ENCODE measurements at regions of chr2 and their contacts with region 1.

Region 1: DNA sequence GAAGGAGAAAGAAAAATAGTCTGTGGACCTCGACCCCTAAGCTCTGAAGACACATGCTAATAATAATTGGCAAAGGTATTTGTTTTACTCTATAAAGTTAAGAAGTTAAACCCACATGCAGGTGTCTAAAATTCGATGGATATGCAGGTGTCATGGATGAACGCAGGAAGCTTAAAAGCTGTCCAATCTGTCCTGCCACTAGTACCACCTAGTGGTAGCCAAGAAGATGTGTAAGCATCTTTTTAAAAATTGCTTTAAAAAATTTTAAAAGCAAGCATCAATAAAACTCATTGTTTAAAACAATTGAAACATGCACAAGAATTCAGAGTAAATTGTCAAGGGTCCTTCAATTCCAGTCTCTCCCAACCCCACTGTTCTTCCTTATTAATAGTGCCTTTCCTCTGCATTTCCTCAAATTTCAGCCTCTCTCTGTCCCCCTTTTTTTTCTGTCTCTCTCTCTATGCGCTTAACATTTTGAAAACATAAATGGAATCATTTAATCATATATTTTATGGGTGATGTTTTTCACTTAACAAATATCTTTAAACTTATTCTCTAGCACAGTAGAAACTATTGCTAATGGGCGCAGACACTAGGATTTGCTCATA is 30.6 kb upstream of the PPP3R1 start:
- DNase-seq: no peak
- H3K4me3 ChIP-seq: no peak overlapping the region
- CTCF ChIP-seq: peak; percentile 54

Region 2: DNA sequence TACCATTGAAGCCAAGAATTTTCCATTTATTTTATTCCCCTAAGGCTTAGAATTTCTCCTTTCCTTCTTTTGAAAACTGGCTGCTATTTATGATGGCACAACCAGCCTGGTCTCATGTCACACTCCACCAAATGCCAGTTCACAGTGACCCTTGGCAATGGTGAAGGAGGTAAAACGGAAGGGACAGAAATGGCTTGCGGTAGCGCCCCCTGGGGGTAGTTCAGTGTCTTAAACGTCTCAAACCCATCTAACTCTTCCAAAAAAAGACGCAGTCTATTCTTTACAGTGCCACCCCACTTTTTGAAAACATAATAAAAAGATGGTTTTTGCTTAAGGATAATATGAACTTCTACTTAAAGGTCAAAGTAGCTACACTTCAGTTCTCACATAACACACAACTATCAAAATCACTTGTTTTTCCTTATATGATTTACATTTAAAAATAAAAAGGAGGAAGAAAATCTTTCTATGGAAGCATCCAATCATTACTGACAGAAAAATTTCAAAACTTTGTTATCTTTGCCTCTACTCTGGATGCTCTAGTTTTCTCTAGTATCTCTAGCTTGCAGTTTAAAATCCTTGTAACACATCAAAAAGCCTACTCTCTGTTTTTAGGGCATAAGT is 97.3 kb before region 1 on chr2:
- CTCF ChIA-PET with region 1: interaction called, 14 read pairs
- POLR2A ChIA-PET with region 1: no interaction called
- DNase-seq: no peak
- H3K4me3 ChIP-seq: no peak overlapping the region
- CTCF ChIP-seq: peak; percentile 51

Region 3: DNA sequence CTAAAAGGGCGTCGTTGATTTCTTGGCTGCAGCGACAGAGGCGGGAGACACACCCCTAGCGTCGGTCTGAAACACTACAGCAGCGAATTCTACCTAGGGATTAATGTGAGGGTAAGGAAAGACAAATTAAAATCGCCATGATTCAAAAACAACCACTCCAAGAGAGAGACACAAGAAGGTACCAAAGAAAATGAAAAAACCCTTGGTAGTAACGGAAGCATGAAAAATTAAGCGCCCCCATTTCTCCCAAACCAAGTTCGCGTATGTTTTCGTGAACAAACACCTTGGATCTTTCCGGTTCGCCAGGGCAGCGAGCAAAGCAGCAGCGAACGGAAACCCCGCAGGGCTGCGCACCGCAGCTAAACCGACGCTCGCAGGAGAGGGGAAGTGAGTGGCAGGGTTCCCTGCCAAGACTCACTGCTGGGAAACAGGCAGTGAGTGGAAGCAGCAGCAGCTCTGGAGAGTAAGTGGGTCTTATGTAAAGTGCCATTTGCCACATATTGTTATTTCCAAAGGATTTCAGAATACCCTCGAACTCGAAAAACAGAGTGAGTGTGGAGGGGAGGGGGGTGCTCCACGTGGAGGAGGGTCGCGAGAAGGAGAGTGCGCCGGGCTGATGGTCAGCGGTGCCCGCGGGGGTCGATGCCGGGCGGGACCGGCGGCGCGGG is 31.6 kb before region 1 on chr2:
- CTCF ChIA-PET with region 1: interaction called, 23 read pairs
- POLR2A ChIA-PET with region 1: interaction called, 3 read pairs
- DNase-seq: no peak
- H3K4me3 ChIP-seq: peak overlapping the region; percentile 87
- CTCF ChIP-seq: peak; percentile 74

Region 4: GRCh38 chr2:68272246-68272994 is 10.5 kb before region 1 on chr2:
- CTCF ChIA-PET with region 1: interaction called, 14 read pairs
- POLR2A ChIA-PET with region 1: no interaction called
- DNase-seq: no peak
- H3K4me3 ChIP-seq: no peak overlapping the region
- CTCF ChIP-seq: no peak

Region 5: DNA sequence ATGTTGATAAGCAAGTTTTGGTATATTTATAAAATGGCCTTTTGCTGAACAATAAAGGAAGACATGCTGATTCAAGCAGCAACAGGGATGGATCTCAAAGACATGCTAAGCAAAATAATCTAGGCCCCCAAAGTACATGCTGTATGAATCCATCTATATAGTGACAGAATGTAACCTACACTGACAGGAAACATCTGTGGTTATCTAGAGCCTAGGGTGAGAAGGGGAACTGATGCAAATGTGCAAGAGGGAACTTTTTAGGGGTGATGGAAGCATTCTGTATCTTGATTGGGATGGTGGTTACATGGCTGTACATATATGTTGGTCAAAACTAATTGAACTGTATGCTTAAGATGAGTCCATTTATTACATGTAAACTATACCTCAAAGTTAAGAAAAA is 12.6 kb after region 1 on chr2:
- CTCF ChIA-PET with region 1: interaction called, 31 read pairs
- POLR2A ChIA-PET with region 1: no interaction called
- DNase-seq: no peak
- H3K4me3 ChIP-seq: no peak overlapping the region
- CTCF ChIP-seq: no peak

Region 6: GRCh38 chr2:68302281-68302875 is 19.5 kb after region 1 on chr2:
- CTCF ChIA-PET with region 1: interaction called, 11 read pairs
- POLR2A ChIA-PET with region 1: no interaction called
- DNase-seq: no peak
- H3K4me3 ChIP-seq: no peak overlapping the region
- CTCF ChIP-seq: no peak

Region 7: GRCh38 chr2:68441179-68441993 is 158.5 kb after region 1 on chr2:
- CTCF ChIA-PET with region 1: interaction called, 36 read pairs
- POLR2A ChIA-PET with region 1: no interaction called
- DNase-seq: no peak
- H3K4me3 ChIP-seq: no peak overlapping the region
- CTCF ChIP-seq: peak; percentile 79

Region 8: DNA sequence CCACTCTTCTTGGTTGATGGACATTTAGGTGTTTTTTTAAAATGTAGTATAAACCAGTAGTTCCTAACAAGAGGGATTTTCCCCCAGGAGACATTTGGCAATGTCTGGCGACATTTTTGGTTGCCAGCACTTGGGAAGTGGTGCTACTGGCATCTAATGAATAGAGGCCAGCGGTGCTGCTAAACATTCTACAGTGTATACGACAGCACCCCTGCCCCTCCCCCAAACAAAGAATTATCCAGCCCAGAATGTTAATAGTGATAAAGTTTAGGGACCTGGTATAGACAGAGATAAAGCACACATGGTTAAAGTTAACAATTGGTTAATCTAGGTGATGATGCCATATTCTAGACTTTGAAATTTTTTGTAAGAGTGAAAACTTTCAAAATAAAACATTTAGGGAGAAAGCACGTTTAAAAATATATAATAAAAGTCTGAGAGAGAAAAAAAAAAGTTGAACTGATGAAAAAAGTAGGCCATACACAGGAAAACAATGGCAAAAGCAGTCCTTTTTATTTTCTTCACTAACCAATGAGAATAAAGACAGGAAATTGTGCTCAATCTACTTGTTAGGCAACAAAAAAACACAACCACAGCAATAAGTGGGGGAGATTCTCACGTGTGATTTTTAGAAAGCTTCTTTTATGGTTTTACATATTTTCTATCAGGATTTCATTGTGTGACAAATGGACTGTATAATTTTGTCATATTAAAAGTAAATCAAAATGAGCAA is 169.4 kb after region 1 on chr2:
- CTCF ChIA-PET with region 1: no interaction called
- POLR2A ChIA-PET with region 1: no interaction called
- DNase-seq: no peak
- H3K4me3 ChIP-seq: no peak overlapping the region
- CTCF ChIP-seq: no peak